ENCODE measurements at regions of chr7 and their contacts with region 1.

Region 1: DNA sequence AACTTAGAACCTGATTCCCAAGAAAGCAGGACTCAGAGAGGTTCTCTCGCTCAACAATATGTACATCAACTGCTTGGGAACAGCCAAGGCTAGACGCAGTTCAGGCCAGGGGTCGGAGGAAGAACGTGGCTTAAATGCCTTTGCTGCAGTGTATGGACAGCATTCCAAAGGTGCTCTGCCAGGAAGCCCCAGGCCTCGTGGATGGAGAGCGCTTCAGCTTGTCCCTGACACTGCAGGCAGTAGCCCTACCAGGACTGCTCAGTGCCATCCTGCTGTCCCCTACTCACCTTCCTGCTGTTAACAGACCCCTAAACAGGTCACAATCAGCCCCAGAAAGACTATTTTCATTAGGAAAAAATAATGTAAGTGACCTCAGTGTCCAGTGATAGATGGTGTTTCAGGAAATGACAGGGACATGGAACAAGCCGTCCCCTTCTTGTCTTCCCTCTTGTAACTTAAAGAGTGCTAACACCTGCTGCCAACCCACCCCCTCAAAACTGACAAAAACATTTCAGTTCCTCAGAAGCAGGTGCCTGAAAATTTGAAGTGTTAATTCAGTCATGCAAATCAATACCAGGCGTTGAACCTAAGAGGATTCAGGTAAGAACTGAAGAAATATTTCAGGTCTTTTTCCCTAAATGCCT is 16.5 kb downstream of the CREB3L2 start:
- DNase-seq: no peak
- H3K4me3 ChIP-seq: no peak overlapping the region
- H3K27ac ChIP-seq: peak overlapping the region; percentile 83 to 91
- H3K4me1 ChIP-seq: peaks cover 55 to 91% of the 10 kb centered on the region in 2 donors
- H3K27me3 ChIP-seq: no peaks in the 10 kb centered on the region
- CTCF ChIP-seq: no peak

Region 2: GRCh38 chr7:137967143-137968018 is 18.0 kb before region 1 on chr7:
- intact Hi-C with region 1: loop called (anchors 2 kb)
- DNase-seq: peak in 1 of 2 donors; percentile 77
- H3K4me3 ChIP-seq: peak overlapping the region in 1 of 2 donors; percentile 14
- H3K27ac ChIP-seq: peak overlapping the region; percentile 85 to 87
- H3K4me1 ChIP-seq: peaks cover 17 to 70% of the 10 kb centered on the region in 2 donors
- H3K27me3 ChIP-seq: no peaks in the 10 kb centered on the region
- CTCF ChIP-seq: no peak

Region 3: GRCh38 chr7:138278601-138279000 is 293.2 kb after region 1 on chr7:
- intact Hi-C with region 1: no loop called
- DNase-seq: no peak
- H3K4me3 ChIP-seq: no peak overlapping the region
- H3K27ac ChIP-seq: no peak overlapping the region
- H3K4me1 ChIP-seq: no peaks in the 10 kb centered on the region
- H3K27me3 ChIP-seq: no peaks in the 10 kb centered on the region
- CTCF ChIP-seq: no peak

Measured in ascending aorta (tissue), 2 donors.